Calu3 (cell line): ENCODE measurements at regions of chr11 and their contacts with region 1.

Region 1: GRCh38 chr11:29432719-29433325 is 584.0 kb downstream of the KCNA4 start:
- DNase-seq: peak; percentile 14
- H3K4me3 Mint-ChIP-seq: no peak overlapping the region
- H3K27ac Mint-ChIP-seq: no peak overlapping the region
- H3K4me1 Mint-ChIP-seq: no peaks in the 10 kb centered on the region
- H3K27me3 Mint-ChIP-seq: no peaks in the 10 kb centered on the region
- CTCF ChIP-seq: peak; percentile 50

Region 2: GRCh38 chr11:29333993-29334775 is 98.6 kb before region 1 on chr11:
- CTCF ChIA-PET with region 1: no interaction called
- intact Hi-C with region 1: no loop called
- DNase-seq: peak; percentile 10
- H3K4me3 Mint-ChIP-seq: no peak overlapping the region
- H3K27ac Mint-ChIP-seq: no peak overlapping the region
- H3K4me1 Mint-ChIP-seq: peaks cover 37% of the 10 kb centered on the region
- H3K27me3 Mint-ChIP-seq: no peaks in the 10 kb centered on the region
- CTCF ChIP-seq: peak; percentile 44

Region 3: DNA sequence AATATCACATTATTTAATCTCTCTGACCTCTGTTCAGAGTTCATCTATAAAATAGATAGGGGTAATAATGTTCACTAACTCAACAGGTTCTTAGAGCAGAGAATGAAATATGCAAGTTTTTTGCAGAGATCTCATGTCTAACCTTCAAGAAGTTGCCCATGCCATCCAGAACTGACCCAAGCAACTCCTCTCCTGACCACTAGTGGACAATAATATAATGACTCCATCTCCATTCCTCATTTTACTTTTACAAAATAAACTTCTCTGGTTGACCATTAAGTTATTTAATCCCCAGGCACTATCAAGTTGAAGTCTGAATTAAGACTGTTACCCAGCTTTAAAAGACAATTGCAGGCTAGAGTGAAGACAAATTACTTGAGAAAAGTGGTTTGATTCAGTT is 201.4 kb after region 1 on chr11:
- CTCF ChIA-PET with region 1: no interaction called
- intact Hi-C with region 1: loop called (anchors 1 kb)
- DNase-seq: no peak
- H3K4me3 Mint-ChIP-seq: no peak overlapping the region
- H3K27ac Mint-ChIP-seq: no peak overlapping the region
- H3K4me1 Mint-ChIP-seq: no peaks in the 10 kb centered on the region
- H3K27me3 Mint-ChIP-seq: peaks cover 36% of the 10 kb centered on the region
- CTCF ChIP-seq: no peak

Region 4: DNA sequence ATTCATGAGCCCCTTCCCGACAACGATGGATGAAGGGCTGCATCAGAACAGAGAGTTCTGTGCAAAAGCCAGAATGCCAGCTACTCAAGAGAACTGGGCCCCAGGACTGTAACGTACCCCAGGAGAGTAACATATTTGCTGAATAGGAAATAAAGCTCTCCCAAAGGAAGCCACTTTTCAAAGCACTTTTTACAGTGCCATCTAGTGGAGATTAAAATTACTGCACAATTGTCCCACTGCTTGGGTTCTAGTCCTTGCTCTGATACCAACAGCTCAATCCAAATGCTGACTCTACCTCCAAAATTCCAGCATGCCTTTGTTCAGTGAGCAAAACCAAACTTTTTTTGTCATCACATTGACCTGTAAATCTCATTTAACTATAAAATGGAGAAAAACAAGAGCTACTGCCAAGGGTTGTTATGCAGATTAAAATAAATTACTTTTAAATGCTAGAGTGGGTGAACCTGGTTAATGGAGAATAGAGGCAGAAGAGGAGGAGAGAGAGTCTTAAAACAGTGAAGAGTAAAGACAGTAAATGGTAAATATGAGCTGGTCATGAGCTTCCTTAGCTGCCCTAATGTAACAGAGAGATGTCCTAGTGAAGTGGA is 710.4 kb after region 1 on chr11:
- CTCF ChIA-PET with region 1: interaction called, 9 read pairs
- intact Hi-C with region 1: loop called (anchors 1 kb)
- DNase-seq: peak; percentile 11
- H3K4me3 Mint-ChIP-seq: no peak overlapping the region
- H3K27ac Mint-ChIP-seq: no peak overlapping the region
- H3K4me1 Mint-ChIP-seq: no peaks in the 10 kb centered on the region
- H3K27me3 Mint-ChIP-seq: no peaks in the 10 kb centered on the region
- CTCF ChIP-seq: peak; percentile 44

Region 5: DNA sequence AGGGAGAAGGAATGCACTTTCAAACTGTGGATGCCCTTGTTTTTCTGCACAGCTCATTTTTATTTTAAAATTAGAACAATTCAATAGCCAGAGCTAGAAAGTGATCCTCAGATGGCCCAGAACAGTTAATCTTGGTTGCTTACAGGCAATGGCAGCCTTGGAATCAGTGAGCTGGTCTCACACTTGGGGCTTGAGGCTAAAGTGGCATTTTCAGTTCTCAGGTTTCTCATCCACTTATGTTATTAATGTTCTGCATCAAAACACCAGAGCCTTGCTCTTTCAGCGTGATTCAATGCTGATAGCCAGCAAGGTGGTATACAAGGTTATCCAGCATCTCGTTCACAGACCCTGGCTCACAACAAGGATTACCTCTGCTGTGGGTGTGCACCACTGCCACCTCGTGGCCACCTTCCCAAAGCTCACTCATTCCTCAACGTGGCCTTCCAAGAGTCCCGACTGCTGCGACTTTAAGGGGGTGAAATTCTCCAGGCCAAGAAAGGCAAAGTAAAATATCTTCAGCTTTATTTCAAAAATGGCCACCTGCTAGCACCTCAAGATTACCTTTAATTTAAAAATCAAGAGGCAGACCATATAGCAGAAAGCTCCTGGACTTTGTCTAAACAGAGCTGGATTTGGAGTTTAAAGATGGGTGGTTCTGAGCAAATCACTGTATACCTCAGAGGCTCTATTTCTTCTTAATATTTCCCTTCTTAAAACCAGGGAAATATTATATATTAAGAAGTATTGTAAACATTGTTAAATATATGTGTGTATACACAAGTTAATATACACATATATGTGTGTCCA is 763.8 kb after region 1 on chr11:
- CTCF ChIA-PET with region 1: no interaction called
- intact Hi-C with region 1: loop called (anchors 2 kb)
- DNase-seq: peak; percentile 67
- H3K4me3 Mint-ChIP-seq: no peak overlapping the region
- H3K27ac Mint-ChIP-seq: no peak overlapping the region
- H3K4me1 Mint-ChIP-seq: no peaks in the 10 kb centered on the region
- H3K27me3 Mint-ChIP-seq: no peaks in the 10 kb centered on the region
- CTCF ChIP-seq: peak; percentile 58

Region 6: GRCh38 chr11:30314625-30315024 is 881.8 kb after region 1 on chr11:
- CTCF ChIA-PET with region 1: no interaction called
- intact Hi-C with region 1: loop called (anchors 5 kb)
- DNase-seq: no peak
- H3K4me3 Mint-ChIP-seq: no peak overlapping the region
- H3K27ac Mint-ChIP-seq: no peak overlapping the region
- H3K4me1 Mint-ChIP-seq: no peaks in the 10 kb centered on the region
- H3K27me3 Mint-ChIP-seq: peaks cover 15% of the 10 kb centered on the region
- CTCF ChIP-seq: no peak

Region 7: GRCh38 chr11:30333405-30333804 is 900.6 kb after region 1 on chr11:
- CTCF ChIA-PET with region 1: no interaction called
- intact Hi-C with region 1: loop called (anchors 5 kb)
- DNase-seq: peak; percentile 16
- H3K4me3 Mint-ChIP-seq: no peak overlapping the region
- H3K27ac Mint-ChIP-seq: no peak overlapping the region
- H3K4me1 Mint-ChIP-seq: no peaks in the 10 kb centered on the region
- H3K27me3 Mint-ChIP-seq: no peaks in the 10 kb centered on the region
- CTCF ChIP-seq: no peak